ENCODE measurements at regions of chr2 and their contacts with region 1.

Region 1: GRCh38 chr2:136738044-136738443 is 27.3 kb upstream of the THSD7B start:
- DNase-seq: no peak
- ATAC-seq: no peak
- H3K4me3 Mint-ChIP-seq: no peak overlapping the region
- H3K27ac Mint-ChIP-seq: no peak overlapping the region
- H3K4me1 Mint-ChIP-seq: peaks cover 17% of the 10 kb centered on the region
- H3K27me3 Mint-ChIP-seq: no peaks in the 10 kb centered on the region
- CTCF ChIP-seq: no peak

Region 2: DNA sequence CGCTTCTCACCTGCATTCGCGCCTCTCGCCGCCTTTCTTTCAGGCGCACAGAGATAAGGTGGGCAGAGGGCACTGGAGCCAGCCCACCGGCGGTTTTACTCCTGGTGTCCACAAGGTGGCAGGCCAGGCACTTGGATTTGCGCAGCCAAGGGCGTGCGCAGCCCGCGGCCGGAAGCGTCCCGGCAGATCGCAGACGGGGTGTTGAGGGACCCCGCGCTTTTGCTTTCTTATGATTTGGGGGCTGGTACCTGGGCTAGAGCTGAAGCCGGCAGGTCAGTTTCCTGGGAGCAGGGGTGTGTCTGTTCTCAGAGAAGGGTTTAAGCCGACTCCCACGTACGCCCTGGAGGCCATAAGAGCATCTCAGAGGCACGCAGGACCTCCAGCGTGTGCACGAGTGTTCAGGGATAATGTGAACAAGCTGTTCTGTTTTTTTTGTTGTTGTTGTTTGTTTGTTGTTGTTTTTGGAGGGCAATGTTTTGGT is 314.5 kb before region 1 on chr2:
- CTCF ChIA-PET with region 1: interaction called, 16 read pairs
- POLR2A ChIA-PET with region 1: no interaction called
- DNase-seq: peak; percentile 91
- ATAC-seq: peak; percentile 99
- H3K4me3 Mint-ChIP-seq: peak overlapping the region; percentile 47
- H3K27ac Mint-ChIP-seq: no peak overlapping the region
- H3K4me1 Mint-ChIP-seq: peaks cover 3% of the 10 kb centered on the region; the same call in 1 of the 2 replicates
- H3K27me3 Mint-ChIP-seq: peaks cover 47% of the 10 kb centered on the region
- CTCF ChIP-seq: peak; percentile 84

Region 3: GRCh38 chr2:136874258-136874657 is 136.2 kb after region 1 on chr2:
- CTCF ChIA-PET with region 1: no interaction called
- POLR2A ChIA-PET with region 1: no interaction called
- DNase-seq: no peak
- ATAC-seq: peak; percentile 71
- H3K4me3 Mint-ChIP-seq: no peak overlapping the region
- H3K27ac Mint-ChIP-seq: no peak overlapping the region
- H3K4me1 Mint-ChIP-seq: peaks cover 5% of the 10 kb centered on the region; the same call in 1 of the 2 replicates
- H3K27me3 Mint-ChIP-seq: no peaks in the 10 kb centered on the region
- CTCF ChIP-seq: no peak